PC-3 (cell line): ENCODE measurements at regions of chr14 and their contacts with region 1.

Region 1: DNA sequence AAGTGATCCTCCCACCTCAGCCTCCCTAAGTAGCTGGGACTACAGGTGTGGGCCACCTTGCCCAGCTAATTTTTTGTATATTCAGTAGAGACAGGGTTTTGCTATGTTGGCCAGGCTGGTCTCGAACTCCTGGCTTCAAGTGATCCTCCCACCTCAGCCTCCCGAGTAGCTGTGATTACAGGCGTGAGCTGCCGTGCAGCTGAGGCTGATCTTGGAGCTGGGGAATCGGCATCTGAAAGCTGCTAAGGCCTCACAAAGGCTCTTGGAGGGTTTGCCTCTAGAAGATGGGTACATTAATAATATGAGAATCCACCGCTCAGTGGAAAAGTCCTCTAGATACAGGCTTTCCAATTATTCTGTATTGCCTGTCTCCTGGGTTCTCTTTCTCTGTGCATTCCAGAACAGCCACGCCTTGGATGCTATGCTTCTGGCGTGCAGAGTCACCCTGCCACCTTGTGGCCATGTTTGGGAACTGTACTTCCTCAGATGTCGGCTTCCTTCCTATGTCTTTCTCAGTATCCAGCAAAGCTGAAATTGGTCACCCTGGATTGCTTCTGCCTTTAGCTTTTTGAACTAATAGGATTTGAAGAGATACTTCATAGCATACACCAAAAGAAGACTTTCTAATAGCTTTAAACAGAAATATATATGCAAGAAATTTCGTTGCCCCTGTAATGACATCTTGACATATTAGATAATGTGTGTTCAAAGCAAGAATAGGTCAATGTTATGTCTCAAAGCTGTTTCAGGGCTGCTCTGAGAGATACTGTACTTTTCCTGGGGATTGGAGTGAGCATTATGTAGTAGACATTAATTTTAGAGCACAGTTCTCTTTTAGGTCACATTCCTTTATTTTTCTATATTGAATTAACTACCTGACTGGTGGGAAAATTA is 75.4 kb downstream of the SNAPC1 start:
- DNase-seq: peak; percentile 97
- ATAC-seq: peak; percentile 85
- H3K4me3 ChIP-seq: no peak overlapping the region
- H3K27ac ChIP-seq: peak overlapping the region; percentile 73
- H3K4me1 ChIP-seq: peaks cover 29% of the 10 kb centered on the region
- H3K27me3 ChIP-seq: no peaks in the 10 kb centered on the region
- CTCF ChIP-seq: peak; percentile 98

Region 2: GRCh38 chr14:61296719-61297502 is 540.7 kb before region 1 on chr14:
- CTCF ChIA-PET with region 1: interaction called, 3 read pairs
- POLR2A ChIA-PET with region 1: no interaction called
- intact Hi-C with region 1: loop called (anchors 1 kb)
- DNase-seq: peak; percentile 87
- ATAC-seq: peak; percentile 84
- H3K4me3 ChIP-seq: no peak overlapping the region
- H3K27ac ChIP-seq: no peak overlapping the region
- H3K4me1 ChIP-seq: no peaks in the 10 kb centered on the region
- H3K27me3 ChIP-seq: no peaks in the 10 kb centered on the region
- CTCF ChIP-seq: peak; percentile 96

Region 3: GRCh38 chr14:61461808-61462275 is 375.7 kb before region 1 on chr14:
- CTCF ChIA-PET with region 1: no interaction called
- POLR2A ChIA-PET with region 1: no interaction called
- intact Hi-C with region 1: loop called (anchors 1 kb)
- DNase-seq: peak; percentile 97
- ATAC-seq: peak; percentile 65
- H3K4me3 ChIP-seq: no peak overlapping the region
- H3K27ac ChIP-seq: peak overlapping the region; percentile 76
- H3K4me1 ChIP-seq: peaks cover 46% of the 10 kb centered on the region
- H3K27me3 ChIP-seq: no peaks in the 10 kb centered on the region
- CTCF ChIP-seq: peak; percentile 96

Region 4: GRCh38 chr14:61512026-61512834 is 325.4 kb before region 1 on chr14:
- CTCF ChIA-PET with region 1: no interaction called
- POLR2A ChIA-PET with region 1: no interaction called
- intact Hi-C with region 1: no loop called
- DNase-seq: peak; percentile 43
- ATAC-seq: 0 out of 2 replicates have a peak, but pooled peaks have one; percentile 1
- H3K4me3 ChIP-seq: no peak overlapping the region
- H3K27ac ChIP-seq: peak overlapping the region; percentile 39
- H3K4me1 ChIP-seq: peaks cover 62% of the 10 kb centered on the region
- H3K27me3 ChIP-seq: no peaks in the 10 kb centered on the region
- CTCF ChIP-seq: no peak

Region 5: GRCh38 chr14:61730756-61731373 is 106.7 kb before region 1 on chr14:
- CTCF ChIA-PET with region 1: no interaction called
- POLR2A ChIA-PET with region 1: no interaction called
- intact Hi-C with region 1: loop called (anchors 5 kb)
- DNase-seq: peak; percentile 68
- ATAC-seq: no peak
- H3K4me3 ChIP-seq: no peak overlapping the region
- H3K27ac ChIP-seq: peak overlapping the region; percentile 19
- H3K4me1 ChIP-seq: peaks cover 17% of the 10 kb centered on the region
- H3K27me3 ChIP-seq: no peaks in the 10 kb centered on the region
- CTCF ChIP-seq: peak; percentile 83

Region 6: DNA sequence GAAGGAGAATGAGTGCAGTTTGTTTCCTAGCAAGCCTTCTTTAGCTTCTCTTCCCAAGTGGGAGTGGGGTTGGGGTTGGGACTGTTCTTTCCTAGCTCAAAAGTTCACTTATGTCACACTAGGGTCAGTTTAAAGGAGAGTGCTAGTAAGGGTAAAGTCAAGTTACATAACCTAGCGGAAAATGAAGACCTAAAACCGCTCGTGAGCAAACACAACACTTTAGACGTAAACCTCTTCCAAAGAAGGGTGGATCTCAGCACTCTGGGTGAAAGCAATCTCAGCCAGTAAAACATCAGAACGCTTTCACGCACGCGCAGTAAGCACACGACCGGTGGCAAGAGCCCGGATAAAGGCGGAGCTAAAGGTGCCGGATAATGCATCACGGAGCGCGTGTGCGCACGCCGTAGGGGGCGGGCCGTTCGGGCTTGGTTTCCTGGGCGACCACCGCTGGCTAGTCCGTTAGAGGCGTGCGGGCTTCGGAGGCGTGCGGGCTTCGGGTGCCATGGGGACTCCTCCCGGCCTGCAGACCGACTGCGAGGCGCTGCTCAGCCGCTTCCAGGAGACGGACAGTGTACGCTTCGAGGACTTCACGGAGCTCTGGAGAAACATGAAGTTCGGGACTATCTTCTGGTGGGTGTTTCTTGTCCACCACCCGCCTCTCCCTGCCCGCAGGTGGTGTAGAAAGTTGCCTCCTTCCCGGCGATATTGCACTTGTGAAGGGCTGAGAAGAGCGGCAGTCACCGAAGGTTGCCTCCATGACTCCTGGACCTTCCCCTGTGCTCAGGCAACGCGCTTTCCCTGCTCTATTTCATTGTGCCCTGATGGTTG is 75.4 kb before region 1 on chr14 and contains the start of gene SNAPC1:
- CTCF ChIA-PET with region 1: interaction called, 7 read pairs
- POLR2A ChIA-PET with region 1: no interaction called
- intact Hi-C with region 1: loop called (anchors 2 kb)
- DNase-seq: peak; percentile 100
- ATAC-seq: peak; percentile 86
- H3K4me3 ChIP-seq: peak within 1 kb of the TSS; percentile 96
- H3K27ac ChIP-seq: peak within 1 kb of the TSS; percentile 55
- H3K4me1 ChIP-seq: peaks cover 32% of the 10 kb centered on the region
- H3K27me3 ChIP-seq: no peaks in the 10 kb centered on the region
- CTCF ChIP-seq: no peak
- total RNA-seq, gene SNAPC1: 26.7 and 27.3 TPM in 2 replicates

Region 7: DNA sequence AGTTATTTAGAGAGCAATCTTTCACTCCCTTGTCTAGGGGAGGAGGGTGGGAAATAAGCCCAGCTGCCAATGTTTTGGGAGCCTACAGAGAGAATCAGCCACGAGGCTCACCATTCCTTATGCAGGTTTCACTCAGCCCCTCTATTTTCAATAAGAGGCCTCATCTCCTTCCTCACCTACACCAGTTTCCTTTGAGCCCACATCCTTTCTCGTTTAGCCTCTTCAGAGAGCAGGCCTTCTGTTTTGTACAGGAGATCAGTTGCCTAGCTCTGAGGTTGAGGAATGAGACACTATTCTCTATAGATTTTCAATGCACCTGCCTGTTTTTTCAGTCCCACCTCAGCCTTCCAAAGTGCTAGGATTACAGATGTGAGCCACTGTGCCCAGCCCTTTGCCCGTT is 57.5 kb before region 1 on chr14:
- CTCF ChIA-PET with region 1: no interaction called
- POLR2A ChIA-PET with region 1: no interaction called
- intact Hi-C with region 1: no loop called
- DNase-seq: no peak
- ATAC-seq: no peak
- H3K4me3 ChIP-seq: no peak overlapping the region
- H3K27ac ChIP-seq: no peak overlapping the region
- H3K4me1 ChIP-seq: peaks cover 4% of the 10 kb centered on the region; the same call in 1 of the 2 replicates
- H3K27me3 ChIP-seq: no peaks in the 10 kb centered on the region
- CTCF ChIP-seq: no peak

Region 8: GRCh38 chr14:61884711-61885110 is 47.1 kb after region 1 on chr14:
- CTCF ChIA-PET with region 1: no interaction called
- POLR2A ChIA-PET with region 1: no interaction called
- intact Hi-C with region 1: loop called (anchors 1 kb)
- DNase-seq: peak; percentile 80
- ATAC-seq: peak; percentile 16; the same call in 1 of the 2 replicates
- H3K4me3 ChIP-seq: peak overlapping the region; percentile 45; the same call in 1 of the 2 replicates
- H3K27ac ChIP-seq: peak overlapping the region; percentile 91
- H3K4me1 ChIP-seq: peaks cover 24% of the 10 kb centered on the region
- H3K27me3 ChIP-seq: no peaks in the 10 kb centered on the region
- CTCF ChIP-seq: no peak

Region 9: DNA sequence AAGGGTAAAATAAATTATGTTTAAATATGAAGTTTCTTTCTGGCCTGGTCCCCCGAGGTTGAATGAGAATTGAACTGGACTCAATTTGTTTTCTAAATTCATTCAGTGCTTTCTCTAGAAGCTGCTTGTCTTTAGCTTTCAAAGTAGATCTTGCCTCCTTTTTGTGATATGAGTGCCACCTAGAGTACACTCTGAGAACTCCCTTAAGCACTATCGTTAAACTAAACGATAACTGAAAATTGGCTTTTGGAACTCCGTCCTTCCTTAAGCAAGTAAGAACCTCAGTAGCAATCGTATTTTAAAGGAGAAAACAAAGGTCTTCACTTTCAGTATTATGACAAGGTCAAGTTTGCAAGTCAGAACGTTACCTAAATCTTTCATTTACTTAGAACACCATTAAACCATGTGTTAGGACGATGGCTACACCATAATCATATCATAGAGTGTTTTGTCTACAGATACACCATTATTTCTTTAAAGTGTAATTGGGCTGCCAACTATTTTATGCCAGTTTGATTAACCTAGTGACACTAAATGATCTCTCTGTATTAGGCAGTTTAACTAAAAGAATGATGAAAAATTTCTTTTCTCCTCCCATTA is 289.4 kb after region 1 on chr14:
- CTCF ChIA-PET with region 1: interaction called, 6 read pairs
- POLR2A ChIA-PET with region 1: no interaction called
- intact Hi-C with region 1: loop called (anchors 1 kb)
- DNase-seq: peak; percentile 85
- ATAC-seq: peak; percentile 88
- H3K4me3 ChIP-seq: no peak overlapping the region
- H3K27ac ChIP-seq: peak overlapping the region; percentile 15; the same call in 1 of the 2 replicates
- H3K4me1 ChIP-seq: peaks cover 5% of the 10 kb centered on the region; the same call in 1 of the 2 replicates
- H3K27me3 ChIP-seq: no peaks in the 10 kb centered on the region
- CTCF ChIP-seq: peak; percentile 94